CD8-positive, alpha-beta T cell (primary cell): ENCODE measurements at regions of chrX and their contacts with region 1.

Region 1: GRCh38 chrX:119943185-119943988 is at the start of gene NKAP:
- DNase-seq: peak; percentile 59 to 90 (median 78)
- ATAC-seq: peak; percentile 82
- H3K4me3 ChIP-seq: peak within 1 kb of the TSS; percentile 94
- H3K4me3 Mint-ChIP-seq: peak within 1 kb of the TSS; percentile 97
- H3K27ac ChIP-seq: peak within 1 kb of the TSS; percentile 91 to 93
- H3K27ac Mint-ChIP-seq: peak within 1 kb of the TSS; percentile 97
- H3K4me1 ChIP-seq: peaks cover 18% of the 10 kb centered on the region
- H3K4me1 Mint-ChIP-seq: peaks cover 24% of the 10 kb centered on the region
- H3K27me3 ChIP-seq: no peaks in the 10 kb centered on the region
- H3K27me3 Mint-ChIP-seq: peaks cover under 1% of the 10 kb centered on the region
- CTCF ChIP-seq: no peak
- total RNA-seq, gene NKAP: 17.4 to 20.1 TPM

Region 2: DNA sequence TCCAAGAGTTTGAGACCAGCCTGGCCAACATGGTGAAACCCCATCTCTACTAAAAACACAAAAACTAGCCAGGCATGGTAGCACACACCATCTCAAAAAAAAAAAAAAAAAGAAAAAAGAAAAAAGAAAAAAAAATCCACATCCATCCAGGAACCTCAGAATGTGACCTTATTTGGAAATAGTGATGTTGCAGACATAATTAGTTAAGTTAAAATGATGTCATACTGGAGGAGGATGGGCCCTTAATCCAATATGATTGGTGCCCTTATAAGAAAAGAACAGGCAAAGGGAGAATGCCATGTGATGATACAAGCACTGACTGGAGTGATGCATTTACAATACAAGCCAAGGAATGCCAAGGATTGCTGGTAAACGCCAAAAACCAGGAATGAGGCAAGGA is 386.0 kb before region 1 on chrX:
- CTCF ChIA-PET with region 1: no interaction called
- POLR2A ChIA-PET with region 1: no interaction called
- intact Hi-C with region 1: no loop called
- DNase-seq: no peak
- ATAC-seq: no peak
- H3K4me3 ChIP-seq: no peak overlapping the region
- H3K4me3 Mint-ChIP-seq: no peak overlapping the region
- H3K27ac ChIP-seq: no peak overlapping the region
- H3K27ac Mint-ChIP-seq: no peak overlapping the region
- H3K4me1 ChIP-seq: no peaks in the 10 kb centered on the region
- H3K4me1 Mint-ChIP-seq: peaks cover 13% of the 10 kb centered on the region
- H3K27me3 ChIP-seq: no peaks in the 10 kb centered on the region
- H3K27me3 Mint-ChIP-seq: no peaks in the 10 kb centered on the region
- CTCF ChIP-seq: no peak

Region 3: DNA sequence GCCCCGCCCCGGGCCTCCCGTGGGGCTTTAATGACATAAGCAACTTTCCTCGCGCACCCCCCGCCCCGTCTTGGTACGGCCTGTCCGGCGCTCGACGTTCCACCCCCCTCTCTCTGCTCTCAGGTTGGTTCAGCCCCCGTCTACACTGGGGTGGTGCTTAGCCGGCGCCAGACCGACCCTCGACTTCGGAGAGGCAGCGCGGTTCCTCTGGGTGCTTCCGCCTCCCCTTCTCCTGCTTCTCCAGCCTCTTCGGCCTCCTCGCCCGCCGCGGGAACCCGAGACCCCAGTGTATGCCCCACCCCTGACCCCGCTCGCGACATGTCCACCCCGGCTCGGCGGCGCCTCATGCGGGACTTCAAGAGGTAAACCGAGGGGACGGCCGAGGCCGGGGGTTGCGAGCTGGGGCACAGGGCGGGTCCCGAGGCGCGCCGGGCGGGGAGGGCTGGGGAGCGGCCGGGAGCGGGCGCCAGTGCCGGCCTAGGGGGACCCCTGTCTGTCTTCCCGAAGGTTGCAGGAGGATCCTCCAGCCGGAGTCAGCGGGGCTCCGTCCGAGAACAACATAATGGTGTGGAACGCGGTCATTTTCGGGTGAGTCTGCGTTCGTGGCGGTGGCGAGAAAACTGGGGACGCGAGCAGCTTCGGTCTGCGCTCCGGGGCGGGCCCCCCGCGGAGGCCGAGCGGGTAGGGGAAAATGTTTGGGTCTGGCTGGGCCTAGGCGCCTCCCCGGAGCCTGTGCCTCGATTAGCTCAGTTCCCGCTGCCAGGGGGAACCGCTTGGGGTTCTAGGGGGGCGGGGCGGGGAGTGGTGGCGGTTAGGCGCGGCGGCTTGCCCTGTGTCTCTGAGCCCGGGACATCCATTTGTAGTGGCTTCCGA is 368.8 kb before region 1 on chrX and contains the start of gene UBE2A:
- CTCF ChIA-PET with region 1: no interaction called
- POLR2A ChIA-PET with region 1: no interaction called
- intact Hi-C with region 1: loop called in 1 of 2 experiments (anchors 5 kb)
- DNase-seq: peak; percentile 80 to 95 (median 89)
- ATAC-seq: peak; percentile 95
- H3K4me3 ChIP-seq: peak within 1 kb of the TSS; percentile 70 to 73
- H3K4me3 Mint-ChIP-seq: peak within 1 kb of the TSS; percentile 92
- H3K27ac ChIP-seq: peak within 1 kb of the TSS; percentile 80 to 83
- H3K27ac Mint-ChIP-seq: peak within 1 kb of the TSS; percentile 92
- H3K4me1 ChIP-seq: peaks cover 8% of the 10 kb centered on the region
- H3K4me1 Mint-ChIP-seq: peaks cover 20% of the 10 kb centered on the region
- H3K27me3 ChIP-seq: no peaks in the 10 kb centered on the region
- H3K27me3 Mint-ChIP-seq: no peaks in the 10 kb centered on the region
- CTCF ChIP-seq: no peak
- total RNA-seq, gene UBE2A: 101 to 103 TPM

Region 4: DNA sequence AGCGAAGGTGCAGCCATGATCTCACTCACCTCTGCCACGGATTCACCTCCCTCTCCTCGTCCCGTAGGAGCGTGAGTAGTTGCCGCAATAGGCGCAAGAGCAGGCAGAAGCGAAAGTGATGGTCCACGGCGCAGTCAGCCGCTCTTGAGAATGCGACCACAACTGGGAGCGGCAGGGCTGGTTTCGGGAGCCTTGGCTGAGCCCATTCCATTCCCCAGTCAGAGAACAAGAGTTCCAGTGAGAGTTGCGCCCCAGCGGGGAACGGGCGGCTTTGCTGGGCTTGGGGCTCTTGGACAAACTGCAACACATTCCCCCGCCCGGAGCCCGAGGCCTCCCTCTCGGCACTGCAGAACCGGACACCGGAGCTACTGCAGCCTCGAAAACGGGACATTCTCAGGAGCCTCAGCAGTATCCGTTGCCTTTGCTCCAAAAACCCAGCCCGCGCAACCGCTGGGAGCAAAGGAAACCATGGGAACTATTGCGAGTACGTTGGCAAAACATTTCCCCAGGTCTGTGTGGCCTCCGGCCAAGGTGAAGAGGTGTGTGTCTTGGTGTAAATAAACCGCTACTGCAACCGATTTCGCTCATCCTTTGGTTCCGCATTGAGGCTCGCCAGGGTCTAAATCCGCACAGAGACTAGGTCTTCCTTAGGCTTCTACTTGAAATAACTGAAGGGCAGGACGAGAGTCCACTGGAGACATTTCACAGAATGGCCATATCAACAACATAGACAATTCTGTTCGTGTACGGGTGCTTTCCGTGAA is 301.5 kb after region 1 on chrX:
- CTCF ChIA-PET with region 1: no interaction called
- POLR2A ChIA-PET with region 1: no interaction called
- intact Hi-C with region 1: loop called (anchors 2 to 5 kb)
- DNase-seq: peak; percentile 28 to 77 (median 59)
- ATAC-seq: peak; percentile 88
- H3K4me3 ChIP-seq: peak overlapping the region; percentile 87 to 90
- H3K4me3 Mint-ChIP-seq: peak overlapping the region; percentile 98
- H3K27ac ChIP-seq: peak overlapping the region; percentile 73 to 90
- H3K27ac Mint-ChIP-seq: peak overlapping the region; percentile 93
- H3K4me1 ChIP-seq: peaks cover 15% of the 10 kb centered on the region
- H3K4me1 Mint-ChIP-seq: peaks cover 26% of the 10 kb centered on the region
- H3K27me3 ChIP-seq: no peaks in the 10 kb centered on the region
- H3K27me3 Mint-ChIP-seq: peaks cover 2% of the 10 kb centered on the region
- CTCF ChIP-seq: no peak